ENCODE measurements at regions of chr11 and their contacts with region 1.

Region 1: DNA sequence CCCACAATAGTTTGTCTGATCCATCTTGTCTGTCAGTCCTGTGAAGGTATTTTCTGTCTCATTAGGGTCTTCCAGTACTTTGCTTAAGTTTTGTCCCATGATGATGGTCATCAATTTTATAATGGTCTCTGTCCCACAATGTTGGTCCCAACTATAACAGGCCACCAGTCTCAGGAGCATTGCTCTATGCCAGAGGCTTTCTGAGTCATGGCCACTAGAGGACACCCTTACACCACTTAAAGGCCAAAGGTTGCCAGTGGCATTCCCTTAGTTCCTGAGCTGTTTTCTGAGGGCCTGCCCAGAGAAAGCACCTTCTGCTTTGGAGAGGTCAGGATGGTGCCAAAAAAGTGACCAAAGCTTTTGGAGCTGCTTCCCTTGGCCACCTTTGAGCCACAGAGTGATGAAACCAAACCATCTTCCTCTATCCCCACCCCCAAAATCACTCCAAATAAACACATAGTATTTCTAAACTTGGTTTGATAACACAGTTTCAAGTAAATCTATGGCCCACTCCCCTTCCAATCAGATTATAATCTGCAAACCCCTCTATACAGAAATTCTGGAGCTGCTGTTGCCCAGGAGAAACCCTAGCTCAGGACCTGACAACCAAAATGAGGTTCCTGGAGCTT is 19.3 kb downstream of the EIF3F start:
- DNase-seq: peak; percentile 63
- ATAC-seq: peak; percentile 80
- H3K4me3 Mint-ChIP-seq: no peak overlapping the region
- H3K27ac Mint-ChIP-seq: no peak overlapping the region
- H3K4me1 Mint-ChIP-seq: no peaks in the 10 kb centered on the region
- H3K27me3 Mint-ChIP-seq: peaks cover 3% of the 10 kb centered on the region

Region 2: DNA sequence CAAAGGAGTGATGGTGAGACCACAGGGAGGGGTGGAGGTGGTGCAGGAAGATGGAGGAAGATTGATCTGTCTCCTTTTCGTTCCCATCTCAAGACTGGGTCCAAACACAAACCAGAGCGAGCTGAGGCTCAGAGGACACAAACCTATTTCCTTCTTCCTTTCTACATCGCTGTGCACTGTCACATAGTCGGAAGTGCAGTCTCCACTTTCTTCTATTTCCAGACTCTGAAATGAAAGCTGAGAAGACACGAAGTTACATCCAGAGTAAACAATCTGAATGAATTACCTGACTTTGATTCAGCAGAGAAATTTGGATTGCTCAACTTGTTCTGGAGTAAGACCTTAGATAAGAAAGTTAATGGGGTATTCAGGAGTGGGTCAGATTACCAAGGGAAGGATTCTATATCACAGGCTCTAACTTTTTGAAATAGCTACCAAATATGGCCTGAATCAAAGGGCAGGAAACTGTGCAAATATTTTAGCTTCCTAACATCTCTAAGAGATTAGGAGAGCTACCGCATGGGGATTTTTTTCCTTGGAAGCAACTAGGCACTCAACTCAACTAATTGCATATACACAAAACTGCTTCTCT is 314.6 kb before region 1 on chr11:
- CTCF ChIA-PET with region 1: no interaction called
- POLR2A ChIA-PET with region 1: no interaction called
- intact Hi-C with region 1: no loop called
- DNase-seq: no peak
- ATAC-seq: no peak
- H3K4me3 Mint-ChIP-seq: no peak overlapping the region
- H3K27ac Mint-ChIP-seq: no peak overlapping the region
- H3K4me1 Mint-ChIP-seq: peaks cover 5% of the 10 kb centered on the region
- H3K27me3 Mint-ChIP-seq: peaks cover 35% of the 10 kb centered on the region

Region 3: DNA sequence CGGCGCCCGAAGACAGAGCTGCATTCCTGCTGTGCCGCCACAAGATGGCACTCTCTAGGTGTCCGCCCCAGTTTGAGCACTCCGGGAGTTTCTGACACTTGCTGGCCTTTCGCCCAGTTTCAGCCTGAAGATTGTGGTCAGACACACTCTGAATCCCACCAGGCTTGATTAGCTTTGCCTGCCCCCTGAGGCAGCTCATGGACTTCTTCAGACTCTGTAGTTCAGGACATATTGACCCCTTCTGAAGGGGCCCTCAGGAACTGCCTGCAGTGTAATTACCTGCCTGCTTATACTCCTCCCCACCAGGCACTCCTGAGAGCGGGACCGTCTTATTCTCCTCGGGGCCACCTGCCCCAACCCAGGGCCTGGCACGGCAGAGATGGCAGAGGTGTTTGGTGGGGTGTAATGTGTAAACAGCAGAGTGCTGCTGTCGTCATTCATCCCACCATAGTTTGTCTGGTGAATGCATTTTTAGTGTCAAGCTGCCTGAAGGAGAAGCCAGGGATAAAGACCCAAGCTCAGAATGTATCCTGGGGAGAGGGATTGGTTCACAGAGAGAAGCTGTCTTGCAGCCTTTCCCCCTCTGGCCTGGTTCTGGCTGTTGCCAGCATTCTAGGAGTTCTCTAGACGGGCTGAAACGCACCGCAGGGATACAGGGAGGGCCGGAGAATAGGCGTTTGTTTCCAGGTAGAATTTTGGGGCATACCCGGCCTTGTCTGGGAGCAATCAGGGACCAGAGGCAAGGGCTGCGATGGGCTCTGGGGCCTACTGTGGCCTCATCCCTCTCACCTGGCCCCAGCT is 27.0 kb after region 1 on chr11:
- CTCF ChIA-PET with region 1: interaction called, 11 read pairs
- POLR2A ChIA-PET with region 1: no interaction called
- intact Hi-C with region 1: loop called in 1 of 2 experiments (anchors 2 kb)
- DNase-seq: peak; percentile 73
- ATAC-seq: peak; percentile 80
- H3K4me3 Mint-ChIP-seq: no peak overlapping the region
- H3K27ac Mint-ChIP-seq: no peak overlapping the region
- H3K4me1 Mint-ChIP-seq: peaks cover 2% of the 10 kb centered on the region
- H3K27me3 Mint-ChIP-seq: peaks cover 20% of the 10 kb centered on the region

Region 4: DNA sequence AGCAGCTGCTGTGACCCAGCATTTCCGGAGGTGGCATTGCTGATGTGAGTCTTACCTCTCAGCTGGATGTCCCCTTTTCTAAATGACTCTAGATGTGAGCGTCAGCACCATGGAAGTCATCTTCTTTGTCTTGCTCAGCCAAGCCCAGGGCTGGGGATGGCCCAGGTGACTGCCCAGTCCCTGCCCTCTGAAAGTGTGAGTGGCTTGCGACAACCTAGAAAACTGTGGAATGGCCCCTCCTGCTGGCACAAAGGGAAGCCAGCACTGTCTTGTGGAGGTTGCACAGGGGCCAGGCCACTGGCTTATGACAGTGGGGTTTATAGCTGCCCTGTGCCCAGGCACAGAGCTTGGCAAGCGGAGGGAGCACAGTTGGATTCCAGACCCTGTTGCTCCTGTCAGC is 80.7 kb after region 1 on chr11:
- CTCF ChIA-PET with region 1: interaction called, 56 read pairs
- POLR2A ChIA-PET with region 1: no interaction called
- intact Hi-C with region 1: loop called (anchors 1 to 2 kb)
- DNase-seq: peak; percentile 25
- ATAC-seq: peak; percentile 42
- H3K4me3 Mint-ChIP-seq: no peak overlapping the region
- H3K27ac Mint-ChIP-seq: no peak overlapping the region
- H3K4me1 Mint-ChIP-seq: no peaks in the 10 kb centered on the region
- H3K27me3 Mint-ChIP-seq: peaks cover 23% of the 10 kb centered on the region

Region 5: GRCh38 chr11:8099291-8099899 is 92.9 kb after region 1 on chr11:
- CTCF ChIA-PET with region 1: interaction called, 57 read pairs
- POLR2A ChIA-PET with region 1: no interaction called
- intact Hi-C with region 1: loop called (anchors 1 kb)
- DNase-seq: peak; percentile 77
- ATAC-seq: peak; percentile 74
- H3K4me3 Mint-ChIP-seq: no peak overlapping the region
- H3K27ac Mint-ChIP-seq: no peak overlapping the region
- H3K4me1 Mint-ChIP-seq: no peaks in the 10 kb centered on the region
- H3K27me3 Mint-ChIP-seq: no peaks in the 10 kb centered on the region

Region 6: DNA sequence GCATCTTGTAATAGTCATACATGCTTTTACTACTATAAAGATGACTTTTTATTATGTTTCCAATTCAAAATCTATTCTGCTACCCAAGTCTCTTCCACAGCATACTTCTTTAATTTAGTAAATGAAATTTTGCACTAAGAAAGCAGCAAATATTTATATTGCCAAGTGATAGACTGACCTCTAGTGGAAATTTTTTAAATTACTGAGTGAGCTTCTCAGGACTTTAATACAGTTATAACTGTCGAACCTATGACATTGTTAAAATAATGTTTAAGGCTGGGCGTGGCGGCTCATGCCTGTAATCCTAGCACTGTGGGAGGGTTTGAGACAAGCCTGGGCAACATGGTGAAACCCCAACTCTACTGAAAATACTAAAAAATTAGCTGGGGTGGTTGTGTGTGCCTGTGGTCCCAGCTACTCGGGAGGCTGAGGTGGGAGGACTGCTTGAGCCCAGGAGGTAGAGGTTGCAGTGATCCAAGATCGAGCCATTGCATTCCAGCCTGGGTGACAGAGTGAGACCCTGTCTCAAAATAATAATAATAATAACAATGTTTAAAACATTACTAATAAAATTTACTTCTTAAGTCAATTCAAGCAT is 560.2 kb after region 1 on chr11:
- CTCF ChIA-PET with region 1: interaction called, 5 read pairs
- POLR2A ChIA-PET with region 1: no interaction called
- intact Hi-C with region 1: loop called in 1 of 2 experiments (anchors 2 kb)
- DNase-seq: peak; percentile 5
- ATAC-seq: peak; percentile 30
- H3K4me3 Mint-ChIP-seq: no peak overlapping the region
- H3K27ac Mint-ChIP-seq: no peak overlapping the region
- H3K4me1 Mint-ChIP-seq: peaks cover 2% of the 10 kb centered on the region
- H3K27me3 Mint-ChIP-seq: peaks cover 22% of the 10 kb centered on the region

Region 7: DNA sequence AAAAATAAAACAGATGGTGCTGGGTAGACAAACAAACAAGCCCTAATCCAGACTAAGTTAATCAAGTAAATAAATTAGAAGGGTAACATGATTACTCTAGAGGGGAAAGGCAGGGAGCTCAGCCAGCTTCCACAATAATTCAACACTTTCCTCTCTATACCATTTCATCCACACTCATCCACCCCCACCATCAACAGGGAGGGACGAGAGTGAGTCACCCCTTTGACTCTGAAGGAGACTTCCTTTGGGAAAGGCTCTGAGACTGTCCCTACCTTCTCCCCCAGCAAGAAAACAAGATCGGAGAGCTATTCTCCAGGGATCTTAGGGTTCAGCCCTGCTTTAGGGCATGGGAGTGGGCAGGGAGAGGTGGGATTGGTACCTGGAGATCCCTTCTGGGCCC is 642.9 kb after region 1 on chr11:
- CTCF ChIA-PET with region 1: no interaction called
- POLR2A ChIA-PET with region 1: no interaction called
- intact Hi-C with region 1: no loop called
- DNase-seq: no peak
- ATAC-seq: no peak
- H3K4me3 Mint-ChIP-seq: no peak overlapping the region
- H3K27ac Mint-ChIP-seq: no peak overlapping the region
- H3K4me1 Mint-ChIP-seq: no peaks in the 10 kb centered on the region
- H3K27me3 Mint-ChIP-seq: no peaks in the 10 kb centered on the region